CD8-positive, alpha-beta memory T cell (primary cell): ENCODE measurements at regions of chr16 and their contacts with region 1.

Region 1: DNA sequence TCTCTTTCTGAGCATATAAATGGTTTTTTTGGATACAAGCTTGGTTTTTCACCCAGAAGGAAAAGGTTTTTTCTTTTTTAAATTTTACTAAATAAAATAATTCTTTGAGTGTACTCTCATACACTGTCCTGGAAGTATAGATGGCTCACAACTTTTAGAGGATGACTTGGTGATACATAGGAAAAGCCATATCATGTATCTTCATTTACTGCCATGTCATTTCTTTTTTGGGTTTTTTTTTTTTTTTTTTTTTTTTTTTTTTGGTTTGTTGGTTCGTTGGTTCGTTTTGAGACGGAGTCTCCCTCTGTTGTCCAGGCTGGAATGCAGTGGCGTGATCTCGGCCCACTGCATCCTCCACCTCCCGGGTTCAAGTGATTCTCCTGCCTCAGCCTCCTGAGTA is 11.8 kb downstream of the OGFOD1 start:
- DNase-seq: no peak
- H3K4me3 ChIP-seq: no peak overlapping the region
- H3K4me3 Mint-ChIP-seq: no peak overlapping the region
- H3K27ac ChIP-seq: peak overlapping the region; percentile 34
- H3K27ac Mint-ChIP-seq: no peak overlapping the region
- H3K4me1 ChIP-seq: no peaks in the 10 kb centered on the region
- H3K4me1 Mint-ChIP-seq: peaks cover 2 to 3% (median 3%) of the 10 kb centered on the region in 3 donors
- H3K27me3 ChIP-seq: no peaks in the 10 kb centered on the region
- H3K27me3 Mint-ChIP-seq: no peaks in the 10 kb centered on the region

Region 2: DNA sequence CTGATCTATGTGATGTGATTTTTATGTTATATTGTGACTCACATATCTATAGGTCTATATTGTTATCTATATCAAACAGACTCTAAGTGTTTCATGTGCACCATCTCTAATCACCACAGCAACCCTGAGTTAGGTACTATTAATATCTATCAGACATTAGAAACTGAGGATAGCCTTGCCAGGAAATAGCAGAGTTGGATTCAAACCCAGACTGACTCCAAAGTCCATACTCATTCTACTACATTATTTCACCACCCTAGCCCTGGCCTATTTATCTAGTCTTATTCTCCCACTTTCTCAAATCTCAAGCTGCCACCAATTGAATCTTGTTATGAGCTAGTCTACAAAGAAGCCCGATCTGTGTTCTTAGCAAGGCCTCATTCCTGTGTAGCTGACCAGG is 337.2 kb before region 1 on chr16:
- CTCF ChIA-PET with region 1: no interaction called
- POLR2A ChIA-PET with region 1: interaction called, 13 read pairs
- DNase-seq: no peak
- H3K4me3 ChIP-seq: no peak overlapping the region
- H3K4me3 Mint-ChIP-seq: no peak overlapping the region
- H3K27ac ChIP-seq: no peak overlapping the region
- H3K27ac Mint-ChIP-seq: no peak overlapping the region
- H3K4me1 ChIP-seq: no peaks in the 10 kb centered on the region
- H3K4me1 Mint-ChIP-seq: peaks cover 0 to 3% (median 0%) of the 10 kb centered on the region in 3 donors
- H3K27me3 ChIP-seq: no peaks in the 10 kb centered on the region
- H3K27me3 Mint-ChIP-seq: peaks cover 18 to 53% of the 10 kb centered on the region in 2 donors

Region 3: GRCh38 chr16:56382901-56383355 is 80.2 kb before region 1 on chr16:
- CTCF ChIA-PET with region 1: no interaction called
- POLR2A ChIA-PET with region 1: no interaction called
- DNase-seq: no peak
- H3K4me3 ChIP-seq: no peak overlapping the region
- H3K4me3 Mint-ChIP-seq: no peak overlapping the region
- H3K27ac ChIP-seq: no peak overlapping the region
- H3K27ac Mint-ChIP-seq: peak overlapping the region in 3 of 8 donors; percentile 4 to 48 (median 37)
- H3K4me1 ChIP-seq: no peaks in the 10 kb centered on the region
- H3K4me1 Mint-ChIP-seq: peaks cover 5 to 11% (median 11%) of the 10 kb centered on the region in 3 donors
- H3K27me3 ChIP-seq: no peaks in the 10 kb centered on the region
- H3K27me3 Mint-ChIP-seq: no peaks in the 10 kb centered on the region

Region 4: DNA sequence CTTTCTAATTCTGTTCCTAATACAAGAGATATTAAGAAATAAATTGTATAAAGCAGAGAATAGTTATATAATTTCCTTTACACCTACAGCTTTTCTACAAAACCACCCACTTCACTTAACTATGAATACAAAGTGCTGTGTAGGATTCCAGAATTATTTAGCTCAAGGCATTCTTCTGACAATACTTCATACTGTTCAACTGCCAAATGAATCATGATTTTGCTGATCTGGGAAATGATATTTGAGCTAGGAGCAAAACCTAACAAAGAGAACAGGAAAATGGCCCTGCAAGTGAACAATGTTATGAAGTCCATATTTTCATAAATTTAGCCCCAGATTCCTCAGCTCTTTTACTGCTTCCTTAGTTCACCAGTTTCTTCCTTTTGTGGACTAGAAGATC is 43.8 kb after region 1 on chr16:
- CTCF ChIA-PET with region 1: no interaction called
- POLR2A ChIA-PET with region 1: no interaction called
- DNase-seq: no peak
- H3K4me3 ChIP-seq: no peak overlapping the region
- H3K4me3 Mint-ChIP-seq: no peak overlapping the region
- H3K27ac ChIP-seq: no peak overlapping the region
- H3K27ac Mint-ChIP-seq: peak overlapping the region in 1 of 8 donors; percentile 19
- H3K4me1 ChIP-seq: no peaks in the 10 kb centered on the region
- H3K4me1 Mint-ChIP-seq: no peaks in the 10 kb centered on the region
- H3K27me3 ChIP-seq: no peaks in the 10 kb centered on the region
- H3K27me3 Mint-ChIP-seq: no peaks in the 10 kb centered on the region